Mammary epithelial cell (primary cell): ENCODE measurements at regions of chr7 and their contacts with region 1.

Region 1: DNA sequence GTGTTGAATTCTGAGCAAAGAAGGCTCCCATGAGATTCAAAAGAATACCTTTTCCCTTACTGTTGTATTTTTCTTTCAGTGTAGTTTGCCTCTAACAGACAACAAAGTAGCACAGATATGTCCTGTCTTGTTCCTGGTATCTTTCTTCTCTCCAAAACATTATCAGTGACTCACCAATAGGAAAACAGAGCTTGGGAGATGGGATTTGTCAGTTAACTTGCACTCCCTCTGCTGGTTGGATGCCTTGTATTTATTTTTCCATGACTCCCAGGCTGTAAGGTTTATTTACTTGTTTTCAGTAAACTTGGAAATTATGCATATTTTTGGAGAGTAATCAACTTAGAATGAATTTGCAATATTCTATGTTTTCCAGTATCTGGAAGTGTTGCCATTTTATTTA is 129.7 kb downstream of the SAMD9 start:
- DNase-seq: peak; percentile 74
- H3K4me3 ChIP-seq: no peak overlapping the region
- H3K27ac ChIP-seq: peak overlapping the region; percentile 43
- H3K4me1 ChIP-seq: peaks cover 15% of the 10 kb centered on the region
- H3K27me3 ChIP-seq: no peaks in the 10 kb centered on the region
- CTCF ChIP-seq: peak; percentile 55 to 67

Region 2: GRCh38 chr7:92621026-92621540 is 367.0 kb before region 1 on chr7:
- CTCF ChIA-PET with region 1: no interaction called
- dilution Hi-C with region 1: no loop called
- in situ Hi-C with region 1: no loop called
- intact Hi-C with region 1: loop called (anchors 1 kb)
- DNase-seq: peak; percentile 78
- H3K4me3 ChIP-seq: no peak overlapping the region
- H3K27ac ChIP-seq: peak overlapping the region; percentile 54
- H3K4me1 ChIP-seq: peaks cover 36% of the 10 kb centered on the region
- H3K27me3 ChIP-seq: no peaks in the 10 kb centered on the region
- CTCF ChIP-seq: peak; percentile 67 to 72

Region 3: DNA sequence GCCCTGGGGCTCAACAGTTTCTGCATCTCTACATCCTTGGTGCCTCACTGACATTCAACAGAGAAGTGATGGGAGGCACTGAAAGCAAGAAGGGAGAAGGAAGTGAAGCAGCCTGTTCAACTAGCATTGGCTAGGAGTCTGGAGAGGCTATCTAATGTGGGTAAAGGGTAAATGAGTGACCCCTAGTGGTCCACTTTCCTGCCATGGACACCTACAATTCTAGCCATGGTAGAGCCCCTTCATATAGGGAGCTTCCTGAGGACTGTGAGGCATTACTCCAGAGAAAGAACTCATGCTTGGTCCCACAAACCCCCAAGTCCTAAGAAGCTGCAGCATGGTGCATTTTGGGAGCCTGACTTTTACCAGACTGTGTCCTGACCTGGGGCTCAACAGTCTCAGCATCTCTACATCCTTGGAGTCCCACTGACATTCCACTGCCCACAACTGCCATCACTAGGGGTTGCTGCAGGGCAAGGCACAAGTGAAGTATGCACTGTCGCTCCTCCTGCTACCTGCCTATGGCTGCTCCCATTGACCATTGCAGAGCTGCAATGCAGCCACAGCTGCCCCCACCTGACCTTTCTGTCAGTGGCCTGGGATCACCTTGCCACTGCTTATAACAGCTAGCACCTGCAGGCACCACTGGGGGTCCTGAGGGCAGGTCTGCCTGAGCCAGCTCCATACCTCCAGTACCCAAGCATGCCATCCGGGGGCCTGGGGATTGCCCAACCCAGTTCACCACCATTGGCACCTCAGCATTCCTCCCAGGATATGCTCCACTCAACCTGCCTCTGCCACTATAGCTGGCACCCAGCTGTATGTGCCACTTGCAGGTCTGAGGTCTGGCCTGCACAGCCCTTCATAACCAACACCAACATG is 107.6 kb before region 1 on chr7:
- CTCF ChIA-PET with region 1: interaction called, 4 read pairs
- dilution Hi-C with region 1: no loop called
- in situ Hi-C with region 1: no loop called
- intact Hi-C with region 1: loop called (anchors 1 kb)
- DNase-seq: peak; percentile 18
- H3K4me3 ChIP-seq: no peak overlapping the region
- H3K27ac ChIP-seq: no peak overlapping the region
- H3K4me1 ChIP-seq: peaks cover 9% of the 10 kb centered on the region
- H3K27me3 ChIP-seq: no peaks in the 10 kb centered on the region
- CTCF ChIP-seq: peak in 1 of 2 donors; percentile 14

Region 4: GRCh38 chr7:92904292-92905131 is 83.5 kb before region 1 on chr7:
- CTCF ChIA-PET with region 1: no interaction called
- dilution Hi-C with region 1: no loop called
- in situ Hi-C with region 1: no loop called
- intact Hi-C with region 1: loop called (anchors 1 kb)
- DNase-seq: peak; percentile 98
- H3K4me3 ChIP-seq: no peak overlapping the region
- H3K27ac ChIP-seq: peak overlapping the region; percentile 96
- H3K4me1 ChIP-seq: peaks cover 23% of the 10 kb centered on the region
- H3K27me3 ChIP-seq: no peaks in the 10 kb centered on the region
- CTCF ChIP-seq: no peak

Region 5: DNA sequence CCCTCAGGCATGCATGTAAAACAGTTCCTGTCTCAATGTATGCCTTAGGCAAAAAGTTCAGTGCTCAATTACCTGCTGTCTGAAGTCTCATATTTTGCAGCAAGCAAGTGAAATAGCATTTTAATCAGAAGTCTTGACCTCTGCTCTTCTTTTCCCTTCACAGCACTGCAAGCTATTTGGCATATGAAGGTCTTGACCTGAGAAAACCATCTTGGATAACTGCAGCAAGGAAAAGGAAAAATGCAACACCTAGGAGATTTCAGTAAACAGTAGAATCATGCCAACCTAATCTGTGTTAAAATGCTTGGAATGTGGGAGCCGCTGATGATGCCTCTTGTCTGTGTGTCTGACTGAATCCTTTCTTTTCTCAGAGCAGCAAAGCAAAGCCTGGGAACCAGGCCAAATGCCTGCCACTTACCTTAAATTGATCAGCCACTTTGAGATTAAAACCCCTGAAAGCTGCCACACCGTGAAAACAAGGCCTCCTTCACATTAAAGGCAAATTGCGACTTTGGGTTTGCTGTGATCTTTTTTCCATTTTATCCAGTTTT is 71.3 kb before region 1 on chr7:
- CTCF ChIA-PET with region 1: no interaction called
- dilution Hi-C with region 1: no loop called
- in situ Hi-C with region 1: no loop called
- intact Hi-C with region 1: loop called (anchors 5 kb)
- DNase-seq: peak; percentile 78
- H3K4me3 ChIP-seq: no peak overlapping the region
- H3K27ac ChIP-seq: peak overlapping the region; percentile 92
- H3K4me1 ChIP-seq: peaks cover 13% of the 10 kb centered on the region
- H3K27me3 ChIP-seq: no peaks in the 10 kb centered on the region
- CTCF ChIP-seq: no peak

Region 6: DNA sequence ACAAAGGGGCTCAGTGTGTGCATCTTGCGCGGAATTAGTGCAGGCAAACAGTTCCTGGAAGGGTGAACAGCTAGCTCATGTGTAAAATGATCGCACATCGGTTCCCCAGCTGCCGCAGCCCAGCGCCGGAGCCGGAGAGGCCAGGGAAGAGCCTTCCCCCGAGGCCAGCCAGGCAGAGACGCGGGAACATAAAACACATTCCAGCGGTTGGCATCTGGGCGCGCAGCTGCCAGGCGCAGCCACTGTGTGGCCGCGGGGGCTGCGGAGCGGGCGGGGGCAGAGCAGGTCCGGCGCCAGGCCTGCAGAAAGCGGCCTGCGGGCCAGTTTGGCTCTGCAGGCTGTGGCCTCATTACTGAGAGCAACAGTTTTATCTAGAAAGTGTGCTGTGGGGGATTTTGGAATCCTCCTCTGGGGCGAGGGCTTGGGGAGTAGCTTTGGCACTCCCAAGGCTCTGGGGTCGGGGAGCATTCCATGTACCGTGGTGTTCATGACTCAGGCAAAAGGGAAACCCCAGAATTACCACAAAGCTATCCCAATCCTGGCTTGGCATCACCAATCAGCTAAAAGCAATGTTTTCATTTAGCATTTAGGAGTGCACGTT is 55.4 kb after region 1 on chr7:
- CTCF ChIA-PET with region 1: no interaction called
- dilution Hi-C with region 1: no loop called
- in situ Hi-C with region 1: no loop called
- intact Hi-C with region 1: loop called (anchors 5 kb)
- DNase-seq: peak; percentile 97
- H3K4me3 ChIP-seq: peak overlapping the region; percentile 22 to 28 (median 27)
- H3K27ac ChIP-seq: peak overlapping the region; percentile 83
- H3K4me1 ChIP-seq: peaks cover 28% of the 10 kb centered on the region
- H3K27me3 ChIP-seq: no peaks in the 10 kb centered on the region
- CTCF ChIP-seq: peak in 1 of 2 donors; percentile 13

Region 7: DNA sequence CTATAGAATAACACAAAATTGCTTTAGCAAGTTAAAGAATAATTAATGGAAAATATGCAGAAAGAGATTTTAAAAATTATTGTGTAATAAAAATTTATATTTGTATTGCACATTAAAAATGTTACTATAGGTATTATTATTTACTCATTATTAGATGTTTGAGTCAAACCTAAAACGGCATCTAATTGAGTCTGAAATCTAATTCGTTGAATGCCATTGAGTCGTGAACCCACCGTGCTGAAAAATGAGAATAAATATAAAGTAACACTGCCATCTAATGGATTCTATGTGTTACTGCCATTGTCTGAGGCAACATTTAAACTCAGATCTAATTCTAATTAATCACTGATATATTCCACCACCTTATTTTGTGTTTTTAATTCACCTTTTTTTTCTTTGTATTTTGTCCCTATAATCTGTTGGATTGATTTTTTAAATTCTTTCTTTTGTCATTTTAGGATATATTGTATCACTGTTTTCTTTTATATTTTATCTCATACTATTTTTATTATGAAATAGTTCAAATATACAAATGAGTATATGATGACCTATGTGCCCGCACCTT is 67.6 kb after region 1 on chr7:
- CTCF ChIA-PET with region 1: no interaction called
- dilution Hi-C with region 1: no loop called
- in situ Hi-C with region 1: no loop called
- intact Hi-C with region 1: loop called (anchors 2 kb)
- DNase-seq: peak; percentile 24
- H3K4me3 ChIP-seq: no peak overlapping the region
- H3K27ac ChIP-seq: no peak overlapping the region
- H3K4me1 ChIP-seq: no peaks in the 10 kb centered on the region
- H3K27me3 ChIP-seq: no peaks in the 10 kb centered on the region
- CTCF ChIP-seq: peak; percentile 61 to 81